ENCODE measurements at regions of chr7 and their contacts with region 1.

Region 1: GRCh38 chr7:136874238-136875032 is 6.0 kb downstream of the CHRM2 start:
- DNase-seq: peak; percentile 55
- ATAC-seq: peak; percentile 51
- H3K4me3 ChIP-seq: no peak overlapping the region
- H3K27ac ChIP-seq: no peak overlapping the region
- H3K4me1 ChIP-seq: no peaks in the 10 kb centered on the region
- H3K27me3 ChIP-seq: peaks cover 67% of the 10 kb centered on the region
- CTCF ChIP-seq: peak; percentile 70

Region 2: DNA sequence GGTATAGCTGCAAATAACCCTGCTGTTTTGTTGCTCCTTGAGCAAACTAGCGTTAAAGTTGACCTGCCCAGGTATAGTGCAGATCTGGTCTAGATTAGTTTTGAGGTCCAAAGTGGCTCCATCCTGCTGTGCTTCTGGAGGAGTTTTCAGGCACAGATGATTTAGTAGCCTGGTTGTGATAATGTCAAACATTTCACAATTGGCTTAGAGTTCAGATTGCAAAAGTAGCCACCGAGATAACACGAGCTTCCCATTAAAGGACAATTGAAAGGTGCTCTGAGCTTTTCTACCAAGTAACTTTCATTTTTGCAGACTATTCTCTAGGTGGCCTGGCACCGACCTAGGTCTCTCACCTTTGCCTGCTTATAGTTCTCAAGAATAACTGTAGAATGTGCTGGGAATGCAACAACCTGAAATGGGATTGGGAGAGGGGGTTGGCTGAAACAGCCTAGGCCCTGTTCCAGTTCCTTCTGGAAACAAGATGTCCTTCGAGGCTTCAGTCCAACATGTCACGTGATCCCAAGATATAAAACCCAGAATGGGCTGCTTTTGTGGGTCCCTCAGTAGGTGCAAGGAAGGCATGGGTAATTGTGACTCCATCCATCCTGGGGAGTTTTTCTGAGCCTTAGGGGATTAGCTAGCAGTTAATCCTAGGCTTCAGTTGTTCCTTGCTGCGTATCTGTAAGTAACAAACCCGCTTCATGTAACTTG is 195.0 kb after region 1 on chr7:
- CTCF ChIA-PET with region 1: interaction called, 13 read pairs
- POLR2A ChIA-PET with region 1: no interaction called
- intact Hi-C with region 1: no loop called
- DNase-seq: no peak
- ATAC-seq: no peak
- H3K4me3 ChIP-seq: no peak overlapping the region
- H3K27ac ChIP-seq: no peak overlapping the region
- H3K4me1 ChIP-seq: peaks cover 25% of the 10 kb centered on the region
- H3K27me3 ChIP-seq: no peaks in the 10 kb centered on the region
- CTCF ChIP-seq: no peak